PC-3 (cell line): ENCODE measurements at regions of chr14 and their contacts with region 1.

Region 1: GRCh38 chr14:24215495-24216344 is at the start of gene MDP1:
- DNase-seq: peak; percentile 93
- ATAC-seq: peak; percentile 79
- H3K4me3 ChIP-seq: peak within 1 kb of the TSS; percentile 81
- H3K27ac ChIP-seq: peak within 1 kb of the TSS; percentile 15; the same call in 1 of the 2 replicates
- H3K4me1 ChIP-seq: peaks cover 11% of the 10 kb centered on the region
- H3K27me3 ChIP-seq: no peaks in the 10 kb centered on the region
- CTCF ChIP-seq: peak; percentile 76
- total RNA-seq, gene MDP1: 16.2 and 23.5 TPM in 2 replicates

Region 2: DNA sequence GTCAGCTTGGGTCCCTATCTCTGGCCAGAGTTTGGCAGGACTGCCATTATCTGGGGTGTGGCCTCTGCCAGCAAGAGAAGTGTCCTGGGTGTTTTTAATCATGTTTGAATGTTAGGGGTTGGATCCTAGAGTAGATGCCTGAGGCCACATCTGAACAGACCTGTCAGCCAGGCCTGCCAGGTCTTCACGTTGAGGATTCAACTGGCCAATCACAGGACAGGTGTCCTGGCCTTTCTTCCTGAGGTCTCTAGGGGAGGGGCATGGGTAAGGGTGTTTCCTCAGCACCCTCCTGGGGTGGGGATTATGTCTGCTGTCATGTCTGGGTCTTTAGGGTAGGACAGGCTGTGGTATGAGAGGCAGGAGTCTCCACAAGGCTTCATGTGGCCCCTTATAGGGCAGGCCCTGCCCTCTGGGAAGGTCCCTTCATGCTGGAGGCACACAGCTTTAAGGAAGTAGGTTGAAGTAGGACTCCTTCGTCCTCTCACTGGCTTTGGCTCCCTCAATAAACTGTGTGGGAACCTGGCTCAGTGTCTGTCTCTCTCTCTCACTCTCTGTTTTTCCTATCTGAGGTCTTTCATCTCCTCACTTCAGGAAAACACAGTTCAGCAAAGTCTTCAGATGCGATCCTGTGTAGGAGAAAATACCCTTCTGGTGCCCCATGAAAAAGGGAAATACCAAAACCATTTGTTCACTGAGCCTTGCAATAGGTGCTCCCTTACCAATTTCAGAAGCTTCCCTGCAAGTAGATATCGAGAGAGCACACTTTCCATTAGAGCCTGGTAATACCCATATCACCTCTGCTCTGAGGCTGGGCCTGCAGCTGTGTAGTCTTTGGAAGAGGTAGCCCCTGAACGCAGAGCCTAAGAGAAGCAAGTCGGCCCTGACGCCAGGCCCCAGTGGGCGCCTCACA is 92.0 kb before region 1 on chr14:
- CTCF ChIA-PET with region 1: no interaction called
- POLR2A ChIA-PET with region 1: no interaction called
- intact Hi-C with region 1: no loop called
- DNase-seq: no peak
- ATAC-seq: no peak
- H3K4me3 ChIP-seq: no peak overlapping the region
- H3K27ac ChIP-seq: no peak overlapping the region
- H3K4me1 ChIP-seq: no peaks in the 10 kb centered on the region
- H3K27me3 ChIP-seq: no peaks in the 10 kb centered on the region
- CTCF ChIP-seq: no peak

Region 3: DNA sequence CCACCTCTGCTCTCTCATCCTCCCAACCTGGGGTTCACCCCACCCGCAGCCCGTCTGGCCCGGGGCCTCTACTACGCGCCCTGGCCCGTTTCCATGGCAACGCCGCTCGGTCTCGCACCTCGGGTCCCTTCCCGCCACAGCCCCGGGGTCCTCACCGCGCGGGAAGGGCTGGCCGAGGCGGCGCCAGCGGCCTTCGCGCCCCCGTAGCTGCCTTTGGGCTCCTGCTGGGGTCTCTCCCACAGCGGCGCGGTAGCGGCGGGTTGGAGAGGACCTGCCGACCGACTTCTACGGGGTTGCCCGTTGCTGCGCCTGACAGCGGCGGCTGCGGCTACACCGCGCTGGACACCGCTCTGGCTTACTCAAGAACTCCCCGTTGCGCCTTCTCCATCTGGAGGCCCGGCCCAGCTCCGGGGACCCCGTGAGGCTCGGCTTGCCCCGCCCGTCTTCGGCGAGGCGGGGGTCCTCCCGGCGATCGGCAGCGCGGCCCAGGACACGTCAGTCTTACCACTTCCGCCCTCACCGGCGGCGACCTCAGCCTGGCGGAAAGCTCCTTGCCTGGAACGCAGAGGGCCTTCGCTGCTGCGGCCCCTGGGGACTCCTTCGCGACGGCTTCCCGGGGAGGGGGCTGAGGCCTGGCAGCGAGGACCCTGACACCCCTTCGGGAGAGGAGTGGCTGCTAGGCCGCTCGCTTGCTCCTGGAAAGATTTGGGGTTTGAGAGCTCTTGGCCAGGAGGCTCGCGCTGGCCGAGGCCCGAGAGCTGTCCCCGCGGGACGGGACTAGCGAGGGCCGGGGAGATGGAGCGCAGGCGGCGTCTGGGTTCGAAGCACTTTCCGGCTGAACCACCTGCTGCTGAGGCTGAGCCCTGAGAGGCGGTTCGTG is 20.3 kb before region 1 on chr14 and contains the start of gene TM9SF1:
- CTCF ChIA-PET with region 1: no interaction called
- POLR2A ChIA-PET with region 1: no interaction called
- intact Hi-C with region 1: loop called (anchors 2 kb)
- DNase-seq: peak; percentile 78
- ATAC-seq: peak; percentile 94
- H3K4me3 ChIP-seq: peak within 1 kb of the TSS; percentile 86
- H3K27ac ChIP-seq: peak within 1 kb of the TSS; percentile 89
- H3K4me1 ChIP-seq: peaks cover 9% of the 10 kb centered on the region
- H3K27me3 ChIP-seq: no peaks in the 10 kb centered on the region
- CTCF ChIP-seq: no peak
- total RNA-seq, gene TM9SF1: 52.1 and 58.3 TPM in 2 replicates

Region 4: GRCh38 chr14:24232121-24232644 is 16.5 kb after region 1 on chr14 and contains the start of gene NEDD8:
- CTCF ChIA-PET with region 1: no interaction called
- POLR2A ChIA-PET with region 1: no interaction called
- intact Hi-C with region 1: loop called (anchors 2 kb)
- DNase-seq: peak; percentile 92
- ATAC-seq: peak; percentile 80
- H3K4me3 ChIP-seq: peak within 1 kb of the TSS; percentile 98
- H3K27ac ChIP-seq: peak within 1 kb of the TSS; percentile 80
- H3K4me1 ChIP-seq: peaks cover 27% of the 10 kb centered on the region
- H3K27me3 ChIP-seq: no peaks in the 10 kb centered on the region
- CTCF ChIP-seq: no peak
- total RNA-seq, gene NEDD8: 330 and 337 TPM in 2 replicates

Region 5: DNA sequence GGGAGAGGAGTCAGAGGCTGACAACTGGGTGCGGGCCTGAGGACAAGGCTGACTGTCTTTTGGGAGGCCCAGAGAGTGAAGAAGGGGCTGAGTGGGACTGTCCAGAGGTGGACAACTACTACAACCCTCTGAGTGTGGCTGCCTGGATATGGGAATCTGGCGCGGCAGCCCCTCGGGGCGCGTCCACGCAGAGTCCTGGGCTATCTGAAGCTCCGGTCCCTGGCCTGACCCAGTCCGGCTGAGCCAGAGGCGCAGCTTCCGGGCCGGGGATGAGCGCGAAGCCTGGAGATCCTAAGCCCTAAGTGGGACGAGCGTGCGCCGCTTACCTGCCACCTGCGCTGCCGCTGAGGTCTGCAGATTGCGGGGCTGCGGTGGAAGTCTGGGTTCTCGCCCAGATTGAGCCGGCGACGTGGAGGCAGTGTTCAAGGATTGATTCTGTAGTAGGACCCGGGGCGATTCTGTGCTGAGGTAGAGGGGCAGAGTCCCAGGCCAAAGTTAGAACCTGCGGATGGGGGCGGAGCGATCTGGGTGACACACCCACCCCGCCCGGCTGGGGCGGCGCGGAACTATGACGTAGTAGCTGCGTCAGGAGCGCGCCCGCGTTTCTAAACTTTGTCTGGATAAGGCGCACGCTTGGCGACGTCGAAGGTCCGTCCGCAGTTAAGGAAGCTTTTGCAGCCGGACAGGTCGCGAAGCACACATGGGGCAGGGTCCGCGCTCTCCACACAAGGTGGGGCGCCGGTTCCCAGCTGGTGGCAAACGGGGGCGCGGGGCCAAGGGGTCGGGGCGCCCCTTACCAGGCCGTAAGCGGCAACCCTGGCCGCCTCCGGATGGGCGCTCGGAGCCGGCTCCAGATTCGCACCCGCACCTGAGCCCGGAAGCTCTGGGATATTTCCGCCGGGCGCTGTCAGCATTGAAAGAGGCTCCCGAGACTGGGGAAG is 83.8 kb after region 1 on chr14 and contains the starts of genes DHRS1 and NOP9:
- CTCF ChIA-PET with region 1: interaction called, 9 read pairs
- POLR2A ChIA-PET with region 1: interaction called, 5 read pairs
- intact Hi-C with region 1: loop called (anchors 5 kb)
- DNase-seq: peak; percentile 95
- ATAC-seq: peak; percentile 65
- H3K4me3 ChIP-seq: peak within 1 kb of the TSS; percentile 93
- H3K27ac ChIP-seq: peak within 1 kb of the TSS; percentile 71
- H3K4me1 ChIP-seq: peaks cover 36% of the 10 kb centered on the region
- H3K27me3 ChIP-seq: no peaks in the 10 kb centered on the region
- CTCF ChIP-seq: no peak
- total RNA-seq, gene DHRS1: 15.8 and 15.9 TPM in 2 replicates
- total RNA-seq, gene NOP9: 30.4 and 35.5 TPM in 2 replicates

Region 6: DNA sequence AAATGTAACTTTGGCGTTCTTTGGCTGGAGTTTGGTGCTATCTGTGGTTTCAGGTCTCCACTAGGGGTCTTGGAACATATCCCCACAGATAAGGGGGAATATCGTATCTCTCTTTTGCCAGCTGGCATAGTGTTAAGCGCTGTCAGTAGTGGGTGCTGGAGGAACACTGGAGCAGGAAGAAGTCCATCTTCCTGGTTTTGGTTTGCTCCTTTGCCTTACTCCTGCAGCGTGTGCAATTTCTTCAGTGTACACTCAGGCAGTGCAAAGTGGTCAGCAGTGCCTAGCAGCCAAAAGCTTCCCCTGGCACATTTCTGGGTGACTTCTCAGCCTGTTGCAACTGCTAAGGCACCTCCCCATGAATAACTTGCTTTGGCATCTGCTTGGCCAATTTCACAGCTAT is 135.8 kb after region 1 on chr14:
- CTCF ChIA-PET with region 1: no interaction called
- POLR2A ChIA-PET with region 1: no interaction called
- intact Hi-C with region 1: no loop called
- DNase-seq: peak; percentile 18
- ATAC-seq: peak; percentile 27; the same call in 1 of the 2 replicates
- H3K4me3 ChIP-seq: no peak overlapping the region
- H3K27ac ChIP-seq: no peak overlapping the region
- H3K4me1 ChIP-seq: peaks cover 8% of the 10 kb centered on the region; the same call in 1 of the 2 replicates
- H3K27me3 ChIP-seq: peaks cover 16% of the 10 kb centered on the region; the same call in 1 of the 2 replicates
- CTCF ChIP-seq: peak; percentile 20; the same call in 1 of the 2 replicates